A549 (cell line): ENCODE measurements at regions of chr9 and their contacts with region 1.

Region 1: DNA sequence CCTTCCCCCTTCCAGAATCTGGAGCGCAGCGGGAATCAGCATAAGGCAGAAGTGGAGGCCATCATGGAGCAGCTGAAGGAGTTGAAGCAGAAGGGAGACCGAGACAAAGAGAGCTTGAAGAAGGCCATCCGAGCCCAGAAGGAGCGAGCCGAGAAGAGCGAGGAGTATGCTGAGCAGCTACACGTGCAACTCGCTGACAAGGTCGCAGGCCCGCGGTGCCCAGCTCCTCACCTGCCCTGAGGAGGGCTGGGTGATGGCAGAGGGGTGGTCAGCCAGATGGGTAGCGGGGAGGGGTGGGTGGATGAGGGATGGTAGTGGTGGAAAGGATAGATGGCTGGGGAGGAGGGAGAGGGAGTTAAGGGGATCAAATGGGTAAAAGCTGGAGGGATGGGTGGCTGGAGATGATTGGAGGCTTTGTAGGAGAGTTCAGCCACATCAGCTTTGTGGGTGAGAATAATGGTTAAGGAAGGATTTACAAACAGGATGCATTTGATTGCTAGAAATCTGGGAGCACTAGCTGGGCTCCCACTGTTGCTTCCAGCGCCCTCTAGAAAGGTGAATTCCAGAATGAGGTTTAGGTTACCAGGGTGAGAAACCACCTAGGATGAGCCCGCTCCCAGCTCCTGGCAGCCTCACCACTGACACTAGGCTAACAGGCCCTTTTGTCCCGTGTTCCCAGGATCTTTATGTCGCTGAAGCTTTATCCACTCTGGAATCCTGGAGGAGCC is 19.7 kb upstream of the GLE1 start:
- DNase-seq: no peak
- ATAC-seq: no peak
- H3K4me3 ChIP-seq: no peak overlapping the region
- H3K27ac ChIP-seq: no peak overlapping the region
- H3K4me1 ChIP-seq: no peaks in the 10 kb centered on the region
- CTCF ChIP-seq: no peak
- EP300 ChIP-seq: no peak
- POLR2A ChIP-seq: no peak
- RAD21 ChIP-seq: no peak

Region 2: GRCh38 chr9:128020692-128021091 is 464.2 kb before region 1 on chr9:
- CTCF ChIA-PET with region 1: no interaction called
- POLR2A ChIA-PET with region 1: no interaction called
- DNase-seq: no peak
- ATAC-seq: peak in 1 of 2 experiments; percentile 32; a peak in 3 of 6 replicates
- H3K4me3 ChIP-seq: no peak overlapping the region
- H3K27ac ChIP-seq: 0 out of 6 replicates have a peak overlapping the region, but pooled peaks of 1 of the 2 experiments have one; percentile 11
- H3K4me1 ChIP-seq: peaks cover 16% of the 10 kb centered on the region
- CTCF ChIP-seq: no peak
- EP300 ChIP-seq: no peak
- POLR2A ChIP-seq: no peak
- RAD21 ChIP-seq: no peak

Region 3: GRCh38 chr9:128495799-128496417 is 11.1 kb after region 1 on chr9:
- CTCF ChIA-PET with region 1: interaction called, 17 read pairs
- POLR2A ChIA-PET with region 1: no interaction called
- DNase-seq: peak in 1 of 2 experiments; percentile 52
- ATAC-seq: peak; percentile 42 to 65; a peak in 4 of 6 replicates
- H3K4me3 ChIP-seq: no peak overlapping the region
- H3K27ac ChIP-seq: no peak overlapping the region
- H3K4me1 ChIP-seq: no peaks in the 10 kb centered on the region
- CTCF ChIP-seq: no peak
- EP300 ChIP-seq: no peak
- POLR2A ChIP-seq: no peak
- RAD21 ChIP-seq: peak in 1 of 2 experiments; percentile 20; a peak in 1 of 5 replicates

Region 4: GRCh38 chr9:128512820-128513219 is 28.0 kb after region 1 on chr9:
- CTCF ChIA-PET with region 1: no interaction called
- POLR2A ChIA-PET with region 1: no interaction called
- DNase-seq: no peak
- ATAC-seq: no peak
- H3K4me3 ChIP-seq: no peak overlapping the region
- H3K27ac ChIP-seq: no peak overlapping the region
- H3K4me1 ChIP-seq: no peaks in the 10 kb centered on the region
- CTCF ChIP-seq: no peak
- EP300 ChIP-seq: no peak
- POLR2A ChIP-seq: no peak
- RAD21 ChIP-seq: no peak